ENCODE measurements at regions of chr5 and their contacts with region 1.

Region 1: GRCh38 chr5:140632150-140633020 is 590 bp downstream of the CD14 start:
- DNase-seq: peak; percentile 64 to 77 (median 77)
- ATAC-seq: peak; percentile 72
- H3K4me3 ChIP-seq: peak overlapping the region; percentile 27
- H3K4me1 ChIP-seq: peaks cover 12% of the 10 kb centered on the region
- CTCF ChIP-seq: no peak

Region 2: DNA sequence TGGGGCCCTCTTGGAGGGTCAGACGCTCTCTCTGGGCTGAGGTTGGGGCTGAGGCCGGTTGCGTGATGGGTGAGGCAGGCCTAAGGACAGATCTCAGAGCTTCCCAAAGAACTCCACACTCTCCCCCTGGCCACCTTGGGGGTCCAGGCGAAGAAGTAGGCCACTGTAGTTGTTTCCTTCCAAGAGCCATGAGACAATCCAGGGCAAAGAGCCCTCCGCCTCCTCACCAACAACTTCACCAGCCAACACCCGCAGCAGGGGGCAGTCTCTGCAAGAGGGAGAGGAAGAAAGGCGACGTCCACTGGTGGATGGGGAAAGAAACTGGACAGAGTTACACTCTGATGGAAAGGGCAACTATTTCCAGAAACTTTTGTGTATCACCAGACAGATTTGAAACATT is 57.1 kb before region 1 on chr5:
- intact Hi-C with region 1: loop called in 1 of 2 experiments (anchors 5 kb)
- DNase-seq: peak in 2 of 3 donors; percentile 72 to 84
- ATAC-seq: peak; percentile 88
- H3K4me3 ChIP-seq: no peak overlapping the region
- H3K4me1 ChIP-seq: peaks cover 8% of the 10 kb centered on the region
- CTCF ChIP-seq: peak; percentile 13